Activated CD4-positive, alpha-beta T cell treated with anti-CD3 and anti-CD28 coated beads, Interleukin-2, amount 10 ng/mL, durations not matched to agents 24 days and 14 days (primary cell): ENCODE measurements at regions of chr1 and their contacts with region 1.

Region 1: GRCh38 chr1:211514030-211514754 is 22.2 kb upstream of the RD3 start:
- DNase-seq: peak; percentile 91
- H3K4me3 Mint-ChIP-seq: peak overlapping the region; percentile 76
- H3K27ac Mint-ChIP-seq: peak overlapping the region; percentile 69
- H3K4me1 Mint-ChIP-seq: peaks cover 24% of the 10 kb centered on the region
- H3K27me3 Mint-ChIP-seq: peaks cover 12% of the 10 kb centered on the region

Region 2: DNA sequence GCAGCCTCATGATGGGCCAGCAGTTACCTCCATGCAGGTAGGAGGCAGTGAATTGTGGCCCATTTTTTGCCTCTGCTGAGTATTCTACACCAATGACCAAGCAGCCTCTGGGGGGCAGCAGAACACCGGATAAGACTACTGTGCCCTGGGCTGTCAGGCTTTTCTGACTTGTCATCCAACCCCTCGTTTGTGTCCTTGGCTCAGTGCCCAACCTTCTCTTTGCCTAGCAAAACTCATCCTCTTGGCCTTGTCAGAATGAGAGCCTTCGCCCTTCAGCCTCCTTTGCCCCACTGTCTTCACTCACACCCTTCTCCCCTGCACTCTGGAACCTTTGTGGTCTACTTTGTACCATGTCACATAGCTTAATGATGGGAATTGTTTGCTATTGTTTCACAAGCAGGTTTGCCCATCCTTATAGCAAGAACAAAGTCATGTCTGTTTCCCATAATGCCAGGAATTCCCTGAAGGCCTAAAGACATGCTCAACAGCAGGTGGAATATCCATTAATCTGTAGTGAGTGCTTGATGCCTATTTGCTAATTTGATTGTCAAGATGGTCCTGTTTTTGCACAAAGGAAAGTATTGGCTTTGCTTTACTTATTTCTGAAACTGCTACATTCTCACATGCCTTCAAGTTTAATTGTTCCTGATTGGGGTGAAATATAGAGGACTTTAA is 929.6 kb before region 1 on chr1:
- intact Hi-C with region 1: loop called (anchors 1 kb)
- DNase-seq: peak; percentile 89
- H3K4me3 Mint-ChIP-seq: no peak overlapping the region
- H3K27ac Mint-ChIP-seq: no peak overlapping the region
- H3K4me1 Mint-ChIP-seq: no peaks in the 10 kb centered on the region
- H3K27me3 Mint-ChIP-seq: peaks cover 3% of the 10 kb centered on the region

Region 3: DNA sequence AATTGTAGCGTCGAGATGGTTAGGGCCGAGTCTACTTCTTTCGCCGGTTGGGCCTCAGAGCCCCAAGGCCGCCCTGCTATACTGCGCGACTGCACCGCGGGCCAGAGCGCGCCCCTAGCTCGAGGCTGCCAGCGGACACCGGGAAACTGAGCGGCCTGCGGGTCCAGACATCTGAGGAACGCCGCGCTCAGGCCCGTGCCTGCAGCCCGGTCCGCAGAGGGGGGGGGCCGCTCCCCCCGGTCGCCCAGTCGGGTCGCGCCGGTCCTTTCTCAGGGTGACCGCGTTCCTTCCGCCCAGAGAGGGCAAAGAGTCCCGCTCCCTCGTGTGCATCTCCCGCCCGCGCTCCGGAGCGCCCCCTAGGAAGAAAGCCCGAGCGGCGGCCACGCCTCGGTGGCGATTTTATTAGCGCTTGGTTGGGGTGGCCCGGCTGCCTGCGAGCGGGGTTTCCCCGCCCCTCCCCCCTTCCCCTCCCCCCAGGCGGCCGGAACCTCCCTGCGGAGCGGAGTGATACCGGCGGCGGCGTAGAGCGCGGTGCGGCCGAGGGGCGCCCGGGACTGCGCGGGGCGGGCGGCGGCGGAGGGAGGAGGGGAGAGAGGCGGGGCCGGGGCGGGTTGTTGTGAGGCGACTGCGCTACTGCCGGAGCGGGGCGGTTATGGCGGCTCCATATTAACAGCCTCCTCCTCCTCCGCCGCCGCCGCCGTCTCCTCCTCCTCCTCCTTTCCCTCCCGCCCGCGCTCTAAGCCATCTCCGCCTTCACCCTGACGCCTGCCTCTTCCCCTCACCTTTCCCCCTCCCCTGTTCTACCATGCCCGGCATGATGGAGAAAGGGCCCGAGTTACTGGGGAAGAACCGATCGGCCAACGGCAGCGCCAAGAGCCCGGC is 255.2 kb before region 1 on chr1 and contains the start of gene RCOR3:
- intact Hi-C with region 1: loop called (anchors 2 kb)
- DNase-seq: peak; percentile 96
- H3K4me3 Mint-ChIP-seq: peak within 1 kb of the TSS; percentile 96
- H3K27ac Mint-ChIP-seq: peak within 1 kb of the TSS; percentile 97
- H3K4me1 Mint-ChIP-seq: peaks cover 13% of the 10 kb centered on the region
- H3K27me3 Mint-ChIP-seq: no peaks in the 10 kb centered on the region
- total RNA-seq, gene RCOR3: 38.0 and 39.8 TPM in 2 replicates

Region 4: DNA sequence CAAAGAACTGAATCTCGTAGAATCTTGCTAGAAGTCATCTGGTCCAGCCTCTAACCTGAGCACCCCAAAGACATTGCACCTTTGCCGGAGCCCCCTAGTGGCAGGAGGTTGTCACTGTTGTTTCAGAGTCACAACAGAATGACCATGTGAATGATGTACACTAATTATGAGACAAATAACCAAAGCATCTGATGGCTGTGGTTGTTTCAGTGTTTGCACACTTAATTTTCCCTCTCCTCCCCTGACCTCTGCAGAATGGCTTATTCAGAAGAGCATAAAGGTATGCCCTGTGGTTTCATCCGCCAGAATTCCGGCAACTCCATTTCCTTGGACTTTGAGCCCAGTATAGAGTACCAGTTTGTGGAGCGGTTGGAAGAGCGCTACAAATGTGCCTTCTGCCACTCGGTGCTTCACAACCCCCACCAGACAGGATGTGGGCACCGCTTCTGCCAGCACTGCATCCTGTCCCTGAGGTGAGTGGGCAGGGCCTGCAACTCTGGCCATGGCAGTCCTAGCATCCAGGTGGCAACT is 161.1 kb before region 1 on chr1:
- intact Hi-C with region 1: no loop called
- DNase-seq: peak; percentile 81
- H3K4me3 Mint-ChIP-seq: peak overlapping the region; percentile 67
- H3K27ac Mint-ChIP-seq: peak overlapping the region; percentile 79
- H3K4me1 Mint-ChIP-seq: peaks cover 50% of the 10 kb centered on the region
- H3K27me3 Mint-ChIP-seq: no peaks in the 10 kb centered on the region

Region 5: DNA sequence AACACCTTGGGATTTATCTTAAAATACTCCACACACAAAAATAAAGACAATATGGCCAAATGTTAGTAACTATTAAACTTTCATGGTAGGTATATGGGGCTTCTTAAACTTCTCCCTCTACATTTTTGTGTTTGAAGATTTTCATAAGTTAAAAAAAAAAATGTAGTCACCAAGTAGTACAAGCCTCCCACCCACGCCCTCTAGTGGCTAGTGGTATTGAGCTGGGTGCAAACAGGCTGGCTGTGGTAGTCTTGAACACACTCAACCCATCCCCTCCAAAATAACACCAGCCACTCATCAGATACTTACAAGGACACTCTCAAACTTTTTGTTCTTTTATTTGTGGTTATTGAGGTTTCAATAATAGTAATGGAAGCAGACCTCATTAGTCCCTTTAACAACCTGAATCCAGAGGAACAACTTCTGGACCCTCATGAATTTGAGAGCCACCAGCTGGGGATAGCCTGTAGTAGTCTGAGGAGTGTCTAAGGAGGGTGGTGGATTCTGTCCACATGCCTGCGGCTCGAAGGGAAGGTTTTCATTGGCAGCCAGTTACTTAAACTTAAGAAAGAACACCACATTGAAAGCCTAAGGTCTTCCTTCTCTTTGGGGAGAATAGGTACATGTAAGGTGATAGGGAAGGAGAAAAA is 37.9 kb before region 1 on chr1:
- intact Hi-C with region 1: loop called (anchors 2 kb)
- DNase-seq: peak; percentile 93
- H3K4me3 Mint-ChIP-seq: no peak overlapping the region
- H3K27ac Mint-ChIP-seq: no peak overlapping the region
- H3K4me1 Mint-ChIP-seq: peaks cover 2% of the 10 kb centered on the region
- H3K27me3 Mint-ChIP-seq: peaks cover 22% of the 10 kb centered on the region

Region 6: GRCh38 chr1:211578640-211579433 is 64.6 kb after region 1 on chr1 and contains the start of gene SLC30A1:
- intact Hi-C with region 1: loop called (anchors 1 kb)
- DNase-seq: peak; percentile 100
- H3K4me3 Mint-ChIP-seq: peak within 1 kb of the TSS; percentile 92
- H3K27ac Mint-ChIP-seq: peak within 1 kb of the TSS; percentile 87
- H3K4me1 Mint-ChIP-seq: peaks cover 33% of the 10 kb centered on the region
- H3K27me3 Mint-ChIP-seq: peaks cover 4% of the 10 kb centered on the region
- total RNA-seq, gene SLC30A1: 8.5 and 9.0 TPM in 2 replicates

Region 7: DNA sequence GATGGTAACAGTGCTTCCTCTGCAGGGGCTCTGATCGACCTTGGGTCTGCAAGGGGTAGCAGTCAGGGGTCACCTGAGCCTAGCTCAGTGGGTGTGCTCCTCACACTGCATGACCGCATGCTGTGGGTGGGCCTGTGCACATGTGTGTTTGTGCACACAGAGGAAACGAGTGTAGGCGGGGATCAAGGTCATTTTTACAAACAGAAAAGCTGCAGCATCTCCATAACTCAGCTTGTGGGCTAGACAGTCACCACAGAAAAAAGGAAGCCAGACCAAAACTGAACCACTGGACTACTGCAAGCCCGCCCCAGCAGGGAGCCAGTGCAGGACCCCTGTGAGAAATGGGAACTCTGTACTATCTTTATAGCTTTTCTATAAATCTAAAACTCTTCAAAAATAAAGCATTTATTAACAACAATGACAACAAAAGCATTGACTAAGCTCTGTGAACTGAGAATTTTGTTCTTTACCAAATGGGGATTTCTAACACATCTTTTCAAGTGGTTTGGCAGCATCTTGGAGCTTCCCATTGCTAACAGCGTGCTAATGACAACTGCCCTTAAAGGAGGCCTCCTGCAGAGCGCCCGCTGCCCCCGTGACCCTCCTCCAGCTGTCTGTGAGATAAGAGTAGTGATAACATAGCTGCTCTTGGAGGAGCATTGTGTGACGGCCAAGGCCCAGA is 181.1 kb after region 1 on chr1:
- intact Hi-C with region 1: no loop called
- DNase-seq: peak; percentile 71
- H3K4me3 Mint-ChIP-seq: peak overlapping the region; percentile 31
- H3K27ac Mint-ChIP-seq: peak overlapping the region; percentile 52
- H3K4me1 Mint-ChIP-seq: peaks cover 30% of the 10 kb centered on the region
- H3K27me3 Mint-ChIP-seq: peaks cover 11% of the 10 kb centered on the region